ENCODE measurements at regions of chr2 and their contacts with region 1.

Region 1: DNA sequence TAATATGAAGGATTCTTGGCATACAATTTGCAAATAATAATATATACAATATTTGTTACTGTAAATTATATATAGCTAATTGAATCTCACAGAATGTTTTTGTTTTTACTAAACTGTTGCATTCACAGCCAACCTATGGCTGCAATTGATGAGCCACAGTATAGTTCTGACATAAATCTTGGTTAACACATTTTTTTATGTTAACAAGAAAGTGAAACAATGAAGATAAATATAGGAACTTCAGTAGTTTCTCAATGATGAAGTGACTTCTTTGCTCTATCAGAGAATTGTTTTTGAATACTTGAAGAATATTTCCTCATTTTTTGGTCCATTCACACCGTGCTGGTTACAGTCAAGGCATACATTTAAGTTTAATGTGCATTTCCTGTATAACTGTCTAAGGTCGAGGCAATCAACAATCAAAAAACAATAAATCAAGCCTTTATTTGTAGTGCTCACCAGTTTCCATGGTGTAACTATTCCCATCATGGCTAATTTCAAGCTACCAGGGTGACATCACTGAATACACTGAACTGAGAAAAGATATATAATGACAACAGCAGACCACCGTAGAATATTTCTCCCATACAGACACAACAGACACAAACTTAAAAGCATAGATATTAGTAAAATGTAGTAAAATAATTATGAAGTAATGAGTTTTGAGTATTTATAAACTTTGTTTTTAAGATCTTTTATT is 12.9 kb upstream of the ETAA1 start:
- DNase-seq: no peak
- H3K4me3 ChIP-seq: no peak overlapping the region
- H3K27ac ChIP-seq: no peak overlapping the region
- H3K4me1 ChIP-seq: peaks cover 0 to 5% (median 0%) of the 10 kb centered on the region in 4 donors
- H3K27me3 ChIP-seq: no peaks in the 10 kb centered on the region
- CTCF ChIP-seq: no peak
- EP300 ChIP-seq: no peak
- POLR2A ChIP-seq: no peak

Region 2: DNA sequence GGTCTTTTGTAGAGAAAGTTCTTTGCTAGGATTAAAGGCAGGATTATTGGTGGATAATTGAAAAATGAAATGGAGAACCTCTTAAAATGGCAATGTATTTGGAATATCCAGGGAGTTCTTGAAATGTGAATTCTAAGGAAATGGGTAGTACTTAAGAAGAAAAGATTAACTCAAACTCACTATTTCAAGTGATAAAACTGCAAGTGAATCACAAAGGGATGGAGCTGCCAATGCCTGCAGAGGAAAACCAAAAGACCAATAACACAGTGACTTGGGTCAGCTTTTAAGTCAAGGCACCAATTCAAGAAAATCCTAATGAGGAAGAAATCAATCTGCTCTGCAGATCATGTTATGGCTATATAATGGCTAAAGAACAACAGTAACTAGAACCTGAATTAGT is 54.8 kb before region 1 on chr2:
- in situ Hi-C with region 1: no loop called
- intact Hi-C with region 1: loop called (anchors 2 kb)
- DNase-seq: no peak
- H3K4me3 ChIP-seq: no peak overlapping the region
- H3K27ac ChIP-seq: no peak overlapping the region
- H3K4me1 ChIP-seq: no peaks in the 10 kb centered on the region
- H3K27me3 ChIP-seq: no peaks in the 10 kb centered on the region
- CTCF ChIP-seq: no peak
- EP300 ChIP-seq: no peak
- POLR2A ChIP-seq: no peak

Measured in transverse colon (tissue), 4 donors.